GM12878 (cell line): ENCODE measurements at regions of chr14 and their contacts with region 1.

Region 1: DNA sequence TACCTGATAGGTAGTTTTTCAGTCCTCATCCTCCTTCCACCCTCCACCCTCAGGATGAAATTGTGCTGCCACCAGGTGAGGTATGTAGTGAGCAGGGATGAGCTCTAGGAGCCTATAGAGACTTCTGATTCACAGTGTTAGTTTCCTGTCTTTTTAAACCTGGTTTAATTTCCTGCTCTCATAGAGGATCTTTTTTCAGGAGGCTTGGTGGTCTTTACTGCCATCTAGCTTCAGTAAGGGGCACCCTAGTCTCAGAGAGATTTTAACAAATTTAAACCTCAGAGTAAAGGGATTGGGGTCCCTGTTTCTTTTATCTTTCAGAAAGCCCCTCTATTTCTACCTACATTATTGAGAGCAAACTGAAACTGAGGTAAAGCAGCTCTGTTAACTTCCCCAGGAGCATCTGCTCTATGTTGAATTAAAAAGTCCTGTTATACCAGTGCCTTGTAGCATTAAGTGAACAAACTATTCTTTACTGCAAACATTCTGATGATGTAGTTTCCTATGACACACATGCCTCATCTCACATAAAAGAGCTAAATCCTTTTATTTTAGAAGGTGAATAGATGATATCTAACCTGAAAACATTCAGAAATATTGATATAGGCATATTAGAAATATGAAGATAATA is 172.2 kb upstream of the DDHD1 start:
- DNase-seq: no peak
- ATAC-seq: peak; percentile 34; the same call in 1 of the 3 replicates
- H3K4me3 ChIP-seq: no peak overlapping the region
- H3K27ac ChIP-seq: no peak overlapping the region
- H3K4me1 ChIP-seq: no peaks in the 10 kb centered on the region
- H3K27me3 ChIP-seq: no peaks in the 10 kb centered on the region
- CTCF ChIP-seq: peak in 2 of 3 experiments; percentile 44 to 49; a peak in 4 of 6 replicates
- EP300 ChIP-seq: no peak
- POLR2A ChIP-seq: no peak
- RAD21 ChIP-seq: peak; percentile 55

Region 2: DNA sequence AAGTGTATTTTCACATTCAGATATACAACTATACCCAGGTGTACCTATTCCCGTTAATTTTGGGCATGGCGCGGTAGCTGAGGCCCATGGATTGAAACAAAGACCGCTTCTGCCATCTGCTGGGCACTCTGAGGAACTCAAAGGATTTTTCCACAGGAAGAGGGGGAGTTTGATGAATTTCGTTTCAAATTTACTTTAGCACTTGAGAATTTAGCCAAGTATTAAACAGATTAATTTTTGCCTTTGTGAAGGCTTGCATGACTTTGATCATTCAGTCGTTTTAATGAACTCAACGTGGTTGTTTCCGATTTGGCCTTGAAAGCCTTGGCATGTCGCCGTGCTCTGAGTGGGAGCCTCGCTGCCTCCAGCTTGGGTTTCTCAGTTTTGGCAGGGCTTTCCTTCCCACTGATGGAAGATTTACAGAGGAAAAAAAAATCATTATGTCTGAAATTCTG is 19.0 kb before region 1 on chr14:
- CTCF ChIA-PET with region 1: interaction called, 22 read pairs
- POLR2A ChIA-PET with region 1: no interaction called
- RAD21 ChIA-PET with region 1: no interaction called
- SMC1A ChIA-PET with region 1: no interaction called
- in situ Hi-C with region 1: no loop called
- intact Hi-C with region 1: no loop called
- DNase-seq: no peak
- ATAC-seq: peak; percentile 77
- H3K4me3 ChIP-seq: peak overlapping the region; percentile 74; the same call in 1 of the 2 replicates
- H3K27ac ChIP-seq: no peak overlapping the region
- H3K4me1 ChIP-seq: peaks cover 6% of the 10 kb centered on the region
- H3K27me3 ChIP-seq: no peaks in the 10 kb centered on the region
- CTCF ChIP-seq: peak; percentile 67 to 80 (median 69); a peak in 5 of 6 replicates
- EP300 ChIP-seq: no peak
- POLR2A ChIP-seq: no peak
- RAD21 ChIP-seq: peak; percentile 93

Region 3: DNA sequence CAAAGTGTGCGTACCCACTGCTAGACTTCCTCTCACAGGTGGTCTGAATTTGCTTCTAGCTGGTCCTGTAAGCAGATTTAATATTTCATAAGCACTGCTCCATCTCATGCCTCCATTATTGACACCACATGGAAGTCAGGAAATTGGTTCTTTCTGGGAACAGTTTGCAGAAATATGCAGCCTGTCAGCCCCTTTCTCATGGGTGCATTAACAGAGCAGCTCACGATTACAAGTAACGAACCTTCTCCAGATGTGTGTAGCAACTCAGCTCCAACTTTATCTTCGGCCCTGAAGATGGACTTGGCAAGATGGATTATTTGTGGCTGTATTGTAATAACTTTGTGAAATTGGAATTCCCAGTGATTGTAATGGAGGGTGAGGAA is 42.3 kb after region 1 on chr14:
- CTCF ChIA-PET with region 1: no interaction called
- POLR2A ChIA-PET with region 1: no interaction called
- RAD21 ChIA-PET with region 1: no interaction called
- SMC1A ChIA-PET with region 1: no interaction called
- in situ Hi-C with region 1: no loop called
- intact Hi-C with region 1: no loop called
- DNase-seq: no peak
- ATAC-seq: no peak
- H3K4me3 ChIP-seq: no peak overlapping the region
- H3K27ac ChIP-seq: no peak overlapping the region
- H3K4me1 ChIP-seq: no peaks in the 10 kb centered on the region
- H3K27me3 ChIP-seq: no peaks in the 10 kb centered on the region
- CTCF ChIP-seq: no peak
- EP300 ChIP-seq: no peak
- POLR2A ChIP-seq: no peak
- RAD21 ChIP-seq: no peak